CD14-positive monocyte (primary cell): ENCODE measurements at regions of chr13 and their contacts with region 1.

Region 1: DNA sequence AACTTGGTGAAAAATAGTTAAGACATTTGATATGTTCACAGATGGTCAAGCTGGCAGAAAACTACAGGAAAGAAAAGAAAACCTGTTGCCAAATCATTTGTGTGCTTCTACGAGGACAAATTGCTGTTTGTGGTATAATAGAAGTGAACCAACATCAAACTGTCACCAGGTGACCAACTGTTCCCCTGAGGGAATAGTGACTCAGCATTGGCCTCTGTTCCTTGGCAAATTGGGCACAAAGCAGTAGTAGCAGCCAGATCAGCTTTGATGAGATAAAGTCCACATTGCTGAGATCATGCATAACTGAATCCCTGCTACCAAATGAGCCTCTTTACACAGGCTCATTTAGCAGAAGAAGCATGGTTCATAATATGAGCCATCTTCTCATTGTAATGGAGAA is 103.5 kb downstream of the POSTN start:
- DNase-seq: no peak
- H3K4me3 ChIP-seq: no peak overlapping the region
- H3K4me3 Mint-ChIP-seq: no peak overlapping the region
- H3K27ac ChIP-seq: no peak overlapping the region
- H3K27ac Mint-ChIP-seq: no peak overlapping the region
- H3K4me1 ChIP-seq: no peaks in the 10 kb centered on the region
- H3K4me1 Mint-ChIP-seq: no peaks in the 10 kb centered on the region
- H3K27me3 ChIP-seq: no peaks in the 10 kb centered on the region
- H3K27me3 Mint-ChIP-seq: no peaks in the 10 kb centered on the region
- CTCF ChIP-seq: no peak

Region 2: DNA sequence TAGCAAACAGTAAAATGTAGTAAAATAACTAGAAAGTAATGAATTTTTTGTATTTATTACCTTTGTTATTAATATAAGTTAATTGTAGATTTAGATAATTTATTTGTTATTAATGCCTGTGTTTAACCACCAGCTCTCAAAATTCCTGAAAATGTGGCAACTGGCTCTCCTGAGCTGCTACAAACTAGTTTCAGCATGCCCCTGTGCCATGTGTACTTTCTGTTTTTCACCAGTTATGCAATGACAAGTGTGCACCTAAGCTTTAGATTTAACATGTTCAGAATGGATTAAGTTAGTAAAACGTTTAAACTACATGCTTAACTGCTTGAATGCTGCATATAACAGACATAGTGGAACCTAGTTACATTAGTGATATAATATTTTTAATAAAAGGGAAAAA is 15.4 kb after region 1 on chr13:
- intact Hi-C with region 1: loop called (anchors 1 to 2 kb)
- DNase-seq: no peak
- H3K4me3 ChIP-seq: no peak overlapping the region
- H3K4me3 Mint-ChIP-seq: no peak overlapping the region
- H3K27ac ChIP-seq: no peak overlapping the region
- H3K27ac Mint-ChIP-seq: no peak overlapping the region
- H3K4me1 ChIP-seq: no peaks in the 10 kb centered on the region
- H3K4me1 Mint-ChIP-seq: no peaks in the 10 kb centered on the region
- H3K27me3 ChIP-seq: no peaks in the 10 kb centered on the region
- H3K27me3 Mint-ChIP-seq: no peaks in the 10 kb centered on the region
- CTCF ChIP-seq: no peak

Region 3: DNA sequence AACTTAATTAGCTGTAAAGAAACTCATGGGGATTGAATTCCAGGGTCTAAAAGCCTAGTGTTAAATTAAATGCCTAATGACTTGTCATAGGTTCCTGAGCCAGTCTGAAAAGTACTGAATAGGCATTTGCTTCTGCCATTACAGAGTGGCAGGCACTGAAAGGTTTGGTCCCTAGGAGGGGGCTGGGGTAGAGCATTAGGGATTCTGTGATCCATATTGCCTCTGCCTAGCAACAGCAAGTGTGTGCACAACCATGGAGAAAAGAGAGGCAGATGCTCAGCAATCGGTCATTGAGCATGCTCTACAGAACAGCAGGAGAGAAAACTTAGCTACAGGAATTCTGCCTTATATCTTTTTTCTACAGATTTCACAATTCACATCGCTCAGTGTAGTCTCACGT is 241.0 kb after region 1 on chr13:
- intact Hi-C with region 1: no loop called
- DNase-seq: no peak
- H3K4me3 ChIP-seq: no peak overlapping the region
- H3K4me3 Mint-ChIP-seq: no peak overlapping the region
- H3K27ac ChIP-seq: no peak overlapping the region
- H3K27ac Mint-ChIP-seq: no peak overlapping the region
- H3K4me1 ChIP-seq: no peaks in the 10 kb centered on the region
- H3K4me1 Mint-ChIP-seq: no peaks in the 10 kb centered on the region
- H3K27me3 ChIP-seq: no peaks in the 10 kb centered on the region
- H3K27me3 Mint-ChIP-seq: no peaks in the 10 kb centered on the region
- CTCF ChIP-seq: no peak